ENCODE measurements at regions of chr6 and their contacts with region 1.

Region 1: DNA sequence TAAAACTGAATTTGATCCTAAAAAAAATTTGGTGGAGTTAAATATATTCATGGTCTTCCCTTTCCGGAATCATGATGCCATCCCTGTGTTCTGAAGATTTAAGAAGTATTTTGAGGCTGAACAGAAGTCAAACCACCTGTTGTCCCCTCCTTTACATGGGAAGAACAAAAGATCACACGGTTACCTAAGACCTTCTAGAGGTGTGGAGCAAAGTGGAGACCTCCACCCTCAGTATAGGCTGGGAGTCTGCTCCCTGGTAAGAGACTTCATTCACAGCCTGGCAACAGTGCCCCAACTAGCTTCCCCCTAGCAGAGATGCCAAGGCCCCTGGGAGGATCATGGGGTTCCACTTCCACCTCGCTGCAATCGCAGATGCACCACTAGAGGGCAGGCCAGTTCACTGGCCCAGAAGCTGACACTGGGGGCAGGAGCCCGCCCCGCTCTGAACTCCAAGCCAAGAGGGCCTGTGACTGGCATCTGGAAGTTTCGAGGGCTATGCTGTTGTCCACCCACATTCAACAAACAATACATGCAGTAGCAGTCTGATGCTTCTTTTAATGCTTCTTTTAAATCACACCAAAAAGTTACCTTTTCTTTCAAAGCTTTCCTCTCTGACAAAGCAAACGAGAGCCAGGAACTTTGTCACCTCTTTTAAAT is 19.5 kb upstream of the UBE2J1 start:
- DNase-seq: peak; percentile 85
- ATAC-seq: peak; percentile 87
- H3K4me3 Mint-ChIP-seq: no peak overlapping the region
- H3K27ac Mint-ChIP-seq: peak overlapping the region; percentile 46
- H3K4me1 Mint-ChIP-seq: peaks cover 19% of the 10 kb centered on the region
- H3K27me3 Mint-ChIP-seq: no peaks in the 10 kb centered on the region
- CTCF ChIP-seq: peak; percentile 84

Region 2: GRCh38 chr6:89352278-89353117 is 19.5 kb before region 1 on chr6 and contains the start of gene UBE2J1:
- CTCF ChIA-PET with region 1: interaction called, 82 read pairs
- POLR2A ChIA-PET with region 1: interaction called, 5 read pairs
- intact Hi-C with region 1: no loop called
- DNase-seq: peak; percentile 82
- ATAC-seq: peak; percentile 83
- H3K4me3 Mint-ChIP-seq: peak within 1 kb of the TSS; percentile 98
- H3K27ac Mint-ChIP-seq: peak within 1 kb of the TSS; percentile 93
- H3K4me1 Mint-ChIP-seq: peaks cover 71% of the 10 kb centered on the region
- H3K27me3 Mint-ChIP-seq: no peaks in the 10 kb centered on the region
- CTCF ChIP-seq: no peak
- total RNA-seq, gene UBE2J1: 23.2 to 24.6 TPM

Region 3: GRCh38 chr6:89385156-89385667 is 13.2 kb after region 1 on chr6:
- CTCF ChIA-PET with region 1: interaction called, 15 read pairs
- POLR2A ChIA-PET with region 1: no interaction called
- intact Hi-C with region 1: no loop called
- DNase-seq: no peak
- ATAC-seq: no peak
- H3K4me3 Mint-ChIP-seq: no peak overlapping the region
- H3K27ac Mint-ChIP-seq: no peak overlapping the region
- H3K4me1 Mint-ChIP-seq: peaks cover 3% of the 10 kb centered on the region
- H3K27me3 Mint-ChIP-seq: no peaks in the 10 kb centered on the region
- CTCF ChIP-seq: no peak

Region 4: GRCh38 chr6:89432875-89433251 is 60.9 kb after region 1 on chr6 and contains the start of gene ANKRD6:
- CTCF ChIA-PET with region 1: interaction called, 40 read pairs
- POLR2A ChIA-PET with region 1: no interaction called
- intact Hi-C with region 1: loop called (anchors 5 kb)
- DNase-seq: peak; percentile 86
- ATAC-seq: peak; percentile 97
- H3K4me3 Mint-ChIP-seq: peak within 1 kb of the TSS; percentile 70
- H3K27ac Mint-ChIP-seq: peak within 1 kb of the TSS; percentile 55
- H3K4me1 Mint-ChIP-seq: peaks cover 16% of the 10 kb centered on the region
- H3K27me3 Mint-ChIP-seq: no peaks in the 10 kb centered on the region
- CTCF ChIP-seq: peak; percentile 76
- total RNA-seq, gene ANKRD6: 3.5 to 4.9 TPM